Calu3 (cell line): ENCODE measurements at regions of chr2 and their contacts with region 1.

Region 1: GRCh38 chr2:101064868-101065549 is 62.9 kb downstream of the RPL31 start:
- DNase-seq: peak; percentile 61
- H3K4me3 Mint-ChIP-seq: peak overlapping the region; percentile 41
- H3K27ac Mint-ChIP-seq: peak overlapping the region; percentile 97
- H3K4me1 Mint-ChIP-seq: peaks cover 42% of the 10 kb centered on the region
- H3K27me3 Mint-ChIP-seq: no peaks in the 10 kb centered on the region
- CTCF ChIP-seq: no peak

Region 2: GRCh38 chr2:100818606-100819369 is 246.2 kb before region 1 on chr2:
- CTCF ChIA-PET with region 1: no interaction called
- intact Hi-C with region 1: no loop called
- DNase-seq: peak; percentile 68
- H3K4me3 Mint-ChIP-seq: peak overlapping the region; percentile 73
- H3K27ac Mint-ChIP-seq: peak overlapping the region; percentile 77
- H3K4me1 Mint-ChIP-seq: peaks cover 47% of the 10 kb centered on the region
- H3K27me3 Mint-ChIP-seq: no peaks in the 10 kb centered on the region
- CTCF ChIP-seq: peak; percentile 23

Region 3: DNA sequence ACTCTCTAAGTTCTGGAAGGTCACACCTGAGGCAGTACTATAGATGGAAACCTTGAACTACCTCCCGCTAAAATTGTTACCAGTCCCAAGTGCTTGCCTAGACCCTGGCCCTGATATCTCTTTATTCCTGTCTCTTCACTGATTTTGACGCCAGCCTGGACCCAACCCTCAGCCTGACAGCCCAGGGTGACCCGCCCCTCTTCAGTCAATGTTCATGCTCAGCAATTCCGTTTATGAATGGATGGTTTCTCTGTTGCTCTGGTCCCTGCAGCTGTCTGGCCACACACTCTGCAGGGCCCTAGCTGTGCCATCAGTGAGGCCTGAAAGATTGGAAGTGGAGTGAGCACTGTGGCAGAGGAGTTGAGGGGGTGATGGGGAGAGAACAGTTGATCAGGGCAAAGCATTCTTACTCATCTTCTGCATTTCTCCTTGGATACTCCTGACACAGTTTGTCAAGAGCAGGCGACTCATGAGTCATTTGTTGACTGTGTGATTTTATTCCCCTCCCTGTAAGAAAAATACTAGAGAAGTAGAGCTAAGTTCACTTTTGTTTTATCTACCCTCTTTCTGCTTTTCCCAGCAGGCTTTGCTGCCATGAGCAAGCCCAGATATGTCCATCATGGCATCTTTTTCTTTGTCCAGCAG is 199.1 kb before region 1 on chr2:
- CTCF ChIA-PET with region 1: no interaction called
- intact Hi-C with region 1: no loop called
- DNase-seq: no peak
- H3K4me3 Mint-ChIP-seq: peak overlapping the region; percentile 8
- H3K27ac Mint-ChIP-seq: peak overlapping the region; percentile 56
- H3K4me1 Mint-ChIP-seq: peaks cover 53% of the 10 kb centered on the region
- H3K27me3 Mint-ChIP-seq: no peaks in the 10 kb centered on the region
- CTCF ChIP-seq: no peak

Region 4: GRCh38 chr2:101001691-101002561 is 63.1 kb before region 1 on chr2 and contains the start of gene RPL31:
- CTCF ChIA-PET with region 1: no interaction called
- intact Hi-C with region 1: no loop called
- DNase-seq: peak; percentile 96
- H3K4me3 Mint-ChIP-seq: peak within 1 kb of the TSS; percentile 84
- H3K27ac Mint-ChIP-seq: peak within 1 kb of the TSS; percentile 93
- H3K4me1 Mint-ChIP-seq: peaks cover 28% of the 10 kb centered on the region
- H3K27me3 Mint-ChIP-seq: no peaks in the 10 kb centered on the region
- CTCF ChIP-seq: no peak
- total RNA-seq, gene RPL31: 1,080 and 1,158 TPM in 2 replicates

Region 5: DNA sequence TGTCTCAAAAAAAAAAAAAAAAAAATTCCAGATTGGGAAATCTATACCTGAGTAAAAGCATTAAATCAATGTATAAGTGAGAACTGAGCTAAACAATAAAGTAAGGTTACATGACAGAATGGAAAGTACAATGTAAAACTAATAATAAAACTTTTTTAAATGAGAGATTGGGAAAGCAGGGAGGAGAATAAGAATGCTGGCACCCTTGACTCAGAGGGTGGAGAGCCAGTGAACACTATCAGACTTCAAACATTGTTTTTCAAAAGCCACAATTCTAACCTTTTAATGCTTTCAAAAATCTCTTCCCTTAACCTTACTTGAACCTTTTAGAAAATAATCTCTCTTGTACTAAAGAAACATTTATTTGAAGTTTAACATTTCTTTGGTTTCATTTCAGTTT is 22.6 kb after region 1 on chr2:
- CTCF ChIA-PET with region 1: interaction called, 3 read pairs
- intact Hi-C with region 1: loop called (anchors 2 kb)
- DNase-seq: no peak
- H3K4me3 Mint-ChIP-seq: no peak overlapping the region
- H3K27ac Mint-ChIP-seq: no peak overlapping the region
- H3K4me1 Mint-ChIP-seq: peaks cover 20% of the 10 kb centered on the region
- H3K27me3 Mint-ChIP-seq: no peaks in the 10 kb centered on the region
- CTCF ChIP-seq: no peak

Region 6: GRCh38 chr2:101124643-101125366 is 59.8 kb after region 1 on chr2:
- CTCF ChIA-PET with region 1: interaction called, 5 read pairs
- intact Hi-C with region 1: loop called (anchors 5 kb)
- DNase-seq: peak; percentile 86
- H3K4me3 Mint-ChIP-seq: peak overlapping the region; percentile 49
- H3K27ac Mint-ChIP-seq: peak overlapping the region; percentile 94
- H3K4me1 Mint-ChIP-seq: peaks cover 77% of the 10 kb centered on the region
- H3K27me3 Mint-ChIP-seq: no peaks in the 10 kb centered on the region
- CTCF ChIP-seq: no peak

Region 7: GRCh38 chr2:101520246-101520645 is 455.2 kb after region 1 on chr2:
- CTCF ChIA-PET with region 1: no interaction called
- intact Hi-C with region 1: no loop called
- DNase-seq: no peak
- H3K4me3 Mint-ChIP-seq: no peak overlapping the region
- H3K27ac Mint-ChIP-seq: no peak overlapping the region
- H3K4me1 Mint-ChIP-seq: peaks cover 49% of the 10 kb centered on the region
- H3K27me3 Mint-ChIP-seq: no peaks in the 10 kb centered on the region
- CTCF ChIP-seq: no peak